GM10248 (cell line): ENCODE measurements at regions of chr5 and their contacts with region 1.

Region 1: DNA sequence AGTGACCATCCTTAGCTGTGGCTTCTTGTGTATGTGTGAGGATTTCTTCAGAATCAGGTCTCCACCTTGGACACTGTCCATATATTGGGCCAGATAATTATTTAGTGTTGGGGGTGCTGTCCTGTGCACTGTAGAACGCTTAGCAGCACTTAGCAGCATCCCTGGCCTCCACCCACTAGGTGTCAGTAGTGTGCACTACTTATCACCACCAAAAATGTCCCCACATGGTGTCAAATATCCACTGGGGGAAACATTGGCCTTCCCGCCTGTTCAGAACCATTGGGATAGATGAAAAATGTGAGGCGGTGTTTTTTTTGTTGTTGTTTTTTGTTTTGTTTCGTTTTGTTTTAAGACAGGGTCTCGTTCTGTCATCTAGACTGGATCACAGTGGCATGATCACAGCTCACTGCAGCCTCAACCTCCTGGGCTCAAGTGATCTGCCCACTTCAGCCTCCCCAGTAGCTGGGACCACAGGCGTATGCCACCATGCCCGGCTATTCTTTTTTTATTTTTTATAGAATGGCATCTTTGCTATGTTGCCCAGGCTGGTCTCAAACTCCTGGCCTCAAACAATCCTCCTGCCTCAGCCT is 67.7 kb downstream of the TENT4A start:
- DNase-seq: no peak
- CTCF ChIP-seq: peak; percentile 52

Region 2: DNA sequence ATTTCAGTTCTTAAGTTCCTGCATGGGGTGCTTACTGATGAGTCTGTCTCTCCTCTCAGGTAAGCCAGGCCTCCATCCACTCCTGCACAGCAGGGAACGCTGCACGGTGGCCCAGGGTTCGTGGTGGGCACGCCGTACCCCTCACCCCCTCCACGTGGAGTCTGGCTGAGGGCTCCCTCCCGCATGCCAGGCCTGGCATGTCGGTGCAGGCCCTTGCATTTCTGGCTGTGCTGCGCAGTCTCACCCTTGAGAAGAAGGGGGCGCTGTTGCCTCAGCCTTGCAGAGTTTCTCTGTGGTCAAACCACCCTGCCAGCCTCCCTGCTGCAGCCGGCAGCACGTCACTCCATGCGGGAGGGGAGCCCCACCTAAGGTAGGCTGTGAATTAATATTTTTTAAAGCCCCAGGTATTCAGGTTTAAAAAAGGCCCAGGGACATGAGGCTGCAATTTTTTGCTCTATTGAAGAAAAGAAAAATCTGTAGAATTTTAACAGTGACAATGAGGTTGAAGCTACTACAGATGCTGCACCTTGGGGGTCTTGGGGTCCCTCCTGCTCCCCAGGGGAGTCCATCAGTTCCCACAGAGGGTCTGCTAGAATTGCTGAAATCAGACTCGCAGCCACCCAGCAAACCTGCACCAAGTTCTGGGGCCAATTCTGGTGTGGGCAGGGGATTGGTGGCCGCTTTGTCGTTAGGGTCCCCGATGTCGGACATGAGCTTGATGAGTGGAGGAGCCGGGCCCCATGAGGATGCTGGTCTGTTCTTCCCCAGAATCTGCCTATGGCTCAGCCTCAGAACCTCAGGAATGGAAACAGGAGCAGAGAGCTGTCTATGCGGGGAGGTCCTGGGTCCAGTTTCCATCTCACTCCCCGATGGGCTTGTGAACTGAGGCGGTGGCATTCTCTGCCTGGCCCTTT is 15.0 kb before region 1 on chr5:
- CTCF ChIA-PET with region 1: interaction called, 15 read pairs
- POLR2A ChIA-PET with region 1: no interaction called
- DNase-seq: peak; percentile 83
- CTCF ChIP-seq: peak; percentile 92

Region 3: DNA sequence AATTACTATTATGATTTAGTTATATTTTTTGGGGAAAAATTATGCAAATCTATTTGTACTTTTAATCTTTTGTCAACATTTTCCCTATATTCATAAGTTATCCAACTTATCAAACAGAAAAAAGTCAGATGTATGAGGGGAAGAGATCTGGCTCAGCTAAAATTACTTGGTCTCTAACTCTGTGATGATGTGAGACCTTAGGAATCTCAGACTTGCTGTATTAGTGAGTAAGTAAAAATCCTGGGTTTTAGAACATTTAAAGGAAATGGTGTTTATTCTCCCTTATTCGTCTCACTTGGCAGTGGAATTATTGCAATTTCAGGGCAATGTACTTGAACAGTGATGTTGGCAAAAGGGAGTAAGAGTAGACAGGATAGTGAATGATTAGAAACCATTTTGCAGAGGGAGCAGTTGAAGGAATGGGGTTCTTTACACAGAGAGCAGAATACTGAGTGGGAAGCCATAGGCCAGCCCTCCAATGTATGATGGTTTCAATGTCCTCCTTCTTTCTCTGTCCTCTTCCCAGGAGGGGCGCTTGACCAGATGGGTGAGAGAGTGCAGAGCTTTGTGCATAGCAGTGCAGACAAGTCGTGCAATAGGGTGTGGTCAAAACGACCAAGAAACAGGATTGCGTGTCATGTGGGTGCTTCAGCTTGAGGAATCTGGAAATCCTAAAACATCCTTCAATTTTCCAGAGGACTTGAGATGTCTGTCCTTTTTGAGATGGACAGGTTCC is 24.0 kb after region 1 on chr5:
- CTCF ChIA-PET with region 1: interaction called, 13 read pairs
- POLR2A ChIA-PET with region 1: no interaction called
- DNase-seq: no peak
- CTCF ChIP-seq: no peak

Region 4: GRCh38 chr5:6979061-6979460 is 198.2 kb after region 1 on chr5:
- CTCF ChIA-PET with region 1: no interaction called
- POLR2A ChIA-PET with region 1: no interaction called
- DNase-seq: no peak
- CTCF ChIP-seq: no peak